ENCODE measurements at regions of chr13 and their contacts with region 1.

Region 1: GRCh38 chr13:62119739-62120700 is 704.4 kb upstream of the PCDH20 start:
- DNase-seq: peak; percentile 27
- H3K4me3 Mint-ChIP-seq: no peak overlapping the region
- H3K27ac Mint-ChIP-seq: no peak overlapping the region
- H3K4me1 Mint-ChIP-seq: no peaks in the 10 kb centered on the region
- H3K27me3 Mint-ChIP-seq: peaks cover 32% of the 10 kb centered on the region
- CTCF ChIP-seq: peak; percentile 37

Region 2: DNA sequence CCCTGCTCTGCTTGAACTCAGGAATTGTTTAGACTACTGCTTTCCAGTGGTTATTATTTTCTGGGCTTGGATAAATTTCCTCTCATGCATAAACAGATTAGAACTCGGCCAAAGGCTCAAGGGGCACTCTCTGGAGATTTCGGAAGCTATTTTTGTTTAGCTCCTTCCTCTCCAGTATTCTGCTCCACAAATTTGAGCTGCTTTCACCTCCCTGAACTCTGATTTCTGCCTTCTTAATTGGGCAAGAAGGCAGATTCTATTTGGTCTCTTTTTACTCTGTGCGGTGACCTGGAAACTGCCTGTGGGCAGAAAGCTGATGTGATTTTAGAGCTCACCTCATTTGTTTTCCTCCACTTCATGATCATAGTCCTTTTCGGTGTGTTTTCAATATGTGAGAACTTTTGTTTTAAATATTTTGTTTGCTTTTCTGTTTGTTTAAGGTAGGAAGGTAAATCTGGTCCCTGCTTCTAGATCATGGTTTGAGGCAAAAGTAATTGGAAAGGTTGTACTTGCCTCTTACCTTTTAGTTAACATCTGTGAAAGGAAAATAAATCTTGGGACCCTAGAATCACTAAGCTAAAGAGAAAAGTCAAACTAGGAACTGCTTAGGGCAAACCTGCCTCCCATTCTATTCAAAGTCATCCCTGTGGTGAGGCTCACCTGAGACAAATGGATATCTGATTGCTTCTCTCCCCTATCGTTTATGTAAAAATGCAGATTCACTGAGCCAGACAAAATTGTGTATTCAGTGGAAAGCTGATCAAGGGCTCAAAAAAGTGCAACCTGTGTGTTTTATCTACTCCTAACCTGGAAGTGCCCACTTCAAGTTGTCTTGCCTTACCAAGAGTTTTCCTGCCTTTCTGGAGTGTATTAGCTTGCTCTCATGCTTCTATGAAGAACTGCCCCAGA is 10.3 kb after region 1 on chr13:
- CTCF ChIA-PET with region 1: interaction called, 10 read pairs
- POLR2A ChIA-PET with region 1: no interaction called
- intact Hi-C with region 1: no loop called
- DNase-seq: no peak
- H3K4me3 Mint-ChIP-seq: no peak overlapping the region
- H3K27ac Mint-ChIP-seq: no peak overlapping the region
- H3K4me1 Mint-ChIP-seq: no peaks in the 10 kb centered on the region
- H3K27me3 Mint-ChIP-seq: no peaks in the 10 kb centered on the region
- CTCF ChIP-seq: no peak

Region 3: GRCh38 chr13:62320129-62321108 is 200.4 kb after region 1 on chr13:
- CTCF ChIA-PET with region 1: interaction called, 7 read pairs
- POLR2A ChIA-PET with region 1: no interaction called
- intact Hi-C with region 1: loop called (anchors 5 kb)
- DNase-seq: peak; percentile 61
- H3K4me3 Mint-ChIP-seq: no peak overlapping the region
- H3K27ac Mint-ChIP-seq: no peak overlapping the region
- H3K4me1 Mint-ChIP-seq: no peaks in the 10 kb centered on the region
- H3K27me3 Mint-ChIP-seq: peaks cover 21% of the 10 kb centered on the region
- CTCF ChIP-seq: peak; percentile 45